ENCODE measurements at regions of chr9 and their contacts with region 1.

Region 1: DNA sequence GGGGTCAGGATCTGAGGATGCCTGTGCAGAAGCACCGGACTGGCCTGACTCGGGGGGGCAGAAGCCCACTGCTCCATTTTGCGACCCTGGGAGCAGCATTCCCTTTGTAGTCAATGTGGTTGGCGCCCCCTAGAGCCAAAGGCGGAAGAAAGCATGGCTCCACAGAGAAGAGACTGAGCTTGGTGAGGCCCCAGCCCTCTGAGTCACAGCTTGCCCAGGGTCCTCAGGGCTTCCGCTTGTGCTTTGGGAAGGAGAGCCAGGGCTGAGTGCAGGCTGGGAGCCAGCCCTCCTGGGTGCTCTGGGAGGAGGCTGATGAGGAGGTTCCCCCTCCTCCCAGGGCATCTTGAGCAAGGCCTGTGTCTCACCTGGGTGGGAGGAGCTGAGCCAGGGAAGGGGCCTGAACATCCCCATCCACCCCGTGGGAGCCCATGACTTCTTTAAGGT is 5.5 kb upstream of the AQP3 start:
- DNase-seq: no peak
- ATAC-seq: peak; percentile 84
- H3K4me3 ChIP-seq: no peak overlapping the region
- H3K27ac ChIP-seq: no peak overlapping the region
- H3K4me1 ChIP-seq: peaks cover 32% of the 10 kb centered on the region
- H3K27me3 ChIP-seq: 0 out of 4 replicates have a peak, but pooled peaks cover 0 to 1% of the 10 kb centered on the region in 2 experiments
- CTCF ChIP-seq: peak; percentile 52 to 78 (median 70)
- EP300 ChIP-seq: no peak
- POLR2A ChIP-seq: no peak
- RAD21 ChIP-seq: peak; percentile 60

Region 2: GRCh38 chr9:33374634-33375213 is 78.1 kb before region 1 on chr9:
- CTCF ChIA-PET with region 1: interaction called, 56 read pairs
- POLR2A ChIA-PET with region 1: interaction called, 5 read pairs
- RAD21 ChIA-PET with region 1: interaction called, 13 read pairs
- SMC1A ChIA-PET with region 1: interaction called, 4 read pairs
- in situ Hi-C with region 1: no loop called
- intact Hi-C with region 1: no loop called
- DNase-seq: no peak
- ATAC-seq: peak; percentile 92
- H3K4me3 ChIP-seq: no peak overlapping the region
- H3K27ac ChIP-seq: no peak overlapping the region
- H3K4me1 ChIP-seq: no peaks in the 10 kb centered on the region
- H3K27me3 ChIP-seq: no peaks in the 10 kb centered on the region
- CTCF ChIP-seq: peak; percentile 80 to 92 (median 88)
- EP300 ChIP-seq: no peak
- POLR2A ChIP-seq: no peak
- RAD21 ChIP-seq: peak; percentile 78

Region 3: GRCh38 chr9:33415501-33416038 is 37.3 kb before region 1 on chr9:
- CTCF ChIA-PET with region 1: interaction called, 113 read pairs
- POLR2A ChIA-PET with region 1: no interaction called
- RAD21 ChIA-PET with region 1: interaction called, 11 read pairs
- SMC1A ChIA-PET with region 1: interaction called, 18 read pairs
- in situ Hi-C with region 1: no loop called
- intact Hi-C with region 1: no loop called
- DNase-seq: peak; percentile 3
- ATAC-seq: peak; percentile 93
- H3K4me3 ChIP-seq: no peak overlapping the region
- H3K27ac ChIP-seq: no peak overlapping the region
- H3K4me1 ChIP-seq: no peaks in the 10 kb centered on the region
- H3K27me3 ChIP-seq: no peaks in the 10 kb centered on the region; a peak in 1 of 4 replicates
- CTCF ChIP-seq: peak; percentile 60 to 85 (median 78)
- EP300 ChIP-seq: no peak
- POLR2A ChIP-seq: no peak
- RAD21 ChIP-seq: peak; percentile 45

Region 4: GRCh38 chr9:33430942-33431341 is 21.9 kb before region 1 on chr9:
- CTCF ChIA-PET with region 1: interaction called, 10 read pairs
- POLR2A ChIA-PET with region 1: no interaction called
- RAD21 ChIA-PET with region 1: interaction called, 3 read pairs
- SMC1A ChIA-PET with region 1: interaction called, 5 read pairs
- in situ Hi-C with region 1: no loop called
- intact Hi-C with region 1: no loop called
- DNase-seq: no peak
- ATAC-seq: no peak
- H3K4me3 ChIP-seq: no peak overlapping the region
- H3K27ac ChIP-seq: no peak overlapping the region
- H3K4me1 ChIP-seq: no peaks in the 10 kb centered on the region
- H3K27me3 ChIP-seq: peaks cover 0 to 6% of the 10 kb centered on the region in 2 experiments; a peak in 2 of 4 replicates
- CTCF ChIP-seq: no peak
- EP300 ChIP-seq: no peak
- POLR2A ChIP-seq: no peak
- RAD21 ChIP-seq: no peak

Region 5: DNA sequence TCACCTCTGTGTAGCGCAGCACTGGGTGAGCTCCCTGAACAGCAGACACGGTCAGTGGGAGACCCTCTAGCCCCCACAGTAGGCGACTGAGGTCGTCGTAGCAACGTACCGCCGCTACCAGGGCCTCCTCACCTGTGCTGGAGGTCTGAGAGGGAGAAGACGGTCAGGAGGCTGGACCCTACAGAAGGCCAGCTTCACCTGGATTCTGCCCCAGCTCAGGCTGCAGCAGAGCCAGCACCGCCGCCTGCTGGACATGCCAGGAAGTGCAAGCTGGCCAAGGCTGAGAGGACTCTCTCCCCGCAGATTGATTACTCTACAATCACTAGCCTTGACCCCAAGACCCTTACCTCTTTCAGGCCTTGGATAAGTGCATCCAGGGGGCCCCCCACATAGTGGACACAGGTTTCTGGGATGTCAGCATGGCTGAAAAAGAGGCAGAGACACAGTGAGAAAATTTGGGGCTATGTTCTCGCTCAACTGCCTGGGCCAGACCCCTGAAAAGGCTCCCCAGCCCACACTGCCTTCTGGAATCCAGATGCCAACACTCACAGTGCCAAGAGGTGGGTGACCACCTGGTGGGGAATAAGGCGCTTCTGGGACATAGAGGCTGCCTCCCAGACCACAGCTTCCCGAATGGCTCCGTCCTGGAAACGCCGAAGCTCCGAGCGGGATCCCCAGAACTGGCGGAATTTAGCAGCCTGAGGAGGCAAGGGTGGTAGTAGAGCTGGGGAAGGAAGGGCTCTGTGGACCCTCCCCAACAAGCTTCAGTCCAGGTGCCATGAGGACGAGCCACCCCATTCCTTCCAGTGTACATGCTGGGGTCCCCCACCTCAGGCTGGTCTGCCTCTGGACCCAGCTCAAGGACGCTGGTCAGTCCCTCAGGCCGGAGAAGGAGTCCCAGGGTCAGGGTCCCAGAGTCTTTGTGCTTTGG is 14.0 kb after region 1 on chr9:
- CTCF ChIA-PET with region 1: interaction called, 154 read pairs
- POLR2A ChIA-PET with region 1: no interaction called
- RAD21 ChIA-PET with region 1: interaction called, 18 read pairs
- SMC1A ChIA-PET with region 1: interaction called, 20 read pairs
- in situ Hi-C with region 1: no loop called
- intact Hi-C with region 1: no loop called
- DNase-seq: no peak
- ATAC-seq: peak; percentile 91
- H3K4me3 ChIP-seq: no peak overlapping the region
- H3K27ac ChIP-seq: no peak overlapping the region
- H3K4me1 ChIP-seq: peaks cover under 1% of the 10 kb centered on the region
- H3K27me3 ChIP-seq: no peaks in the 10 kb centered on the region
- CTCF ChIP-seq: peak; percentile 81 to 99 (median 98)
- EP300 ChIP-seq: no peak
- POLR2A ChIP-seq: no peak
- RAD21 ChIP-seq: peak; percentile 84

Region 6: DNA sequence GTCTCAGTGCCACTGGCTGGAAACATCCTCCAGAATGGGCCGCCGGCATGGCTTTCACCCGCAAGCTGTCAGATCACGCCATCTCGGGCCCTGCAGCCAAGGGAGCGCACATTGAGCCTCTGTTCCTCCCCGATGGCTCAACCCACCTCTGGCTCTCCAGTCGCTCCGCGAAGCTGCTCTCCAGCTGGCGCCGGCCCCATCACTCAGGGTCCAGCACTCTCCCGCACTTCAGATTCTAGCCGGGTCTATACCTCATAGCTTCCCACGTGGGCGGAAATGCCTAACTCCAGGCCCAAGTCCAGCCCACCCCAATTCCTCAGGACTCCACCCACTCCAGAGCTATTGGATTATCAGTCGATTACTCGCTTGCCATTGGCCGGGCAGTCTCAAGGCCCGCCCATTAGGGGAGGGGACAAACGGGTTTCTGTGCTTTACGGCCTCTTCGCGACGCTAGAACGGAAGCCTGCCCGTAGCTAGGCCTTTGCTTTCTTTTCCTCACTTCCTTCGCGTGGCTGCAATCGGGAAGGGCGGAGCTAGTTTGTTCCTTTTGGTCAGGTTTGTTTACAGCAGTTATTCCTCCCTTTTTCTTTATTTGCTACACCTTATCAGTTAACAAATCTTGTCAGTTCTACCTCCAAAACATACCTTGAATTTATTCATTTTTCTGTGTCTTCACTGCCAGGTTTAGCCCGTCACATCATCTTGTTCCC is 20.9 kb after region 1 on chr9 and contains the start of gene NOL6:
- CTCF ChIA-PET with region 1: interaction called, 154 read pairs
- POLR2A ChIA-PET with region 1: interaction called, 12 read pairs
- RAD21 ChIA-PET with region 1: interaction called, 10 read pairs
- SMC1A ChIA-PET with region 1: interaction called, 20 read pairs
- in situ Hi-C with region 1: no loop called
- intact Hi-C with region 1: no loop called
- DNase-seq: peak; percentile 99
- ATAC-seq: peak; percentile 100
- H3K4me3 ChIP-seq: peak within 1 kb of the TSS; percentile 96
- H3K27ac ChIP-seq: peak within 1 kb of the TSS; percentile 54
- H3K4me1 ChIP-seq: peaks cover 7% of the 10 kb centered on the region
- H3K27me3 ChIP-seq: no peaks in the 10 kb centered on the region
- CTCF ChIP-seq: no peak
- EP300 ChIP-seq: no peak
- POLR2A ChIP-seq: peak; percentile 84
- RAD21 ChIP-seq: no peak
- polyA plus RNA-seq, gene NOL6: 8.3 to 13.2 TPM

Measured in GM12878 (cell line).